Naive thymus-derived CD8-positive, alpha-beta T cell (primary cell): ENCODE measurements at regions of chr15 and their contacts with region 1.

Region 1: GRCh38 chr15:90677807-90678790 is 39.0 kb upstream of the BLM start:
- DNase-seq: peak in 4 of 10 donors; percentile 25 to 69 (median 56)
- ATAC-seq: peak; percentile 91 to 95
- H3K4me3 Mint-ChIP-seq: peak overlapping the region in 8 of 10 donors; percentile 62 to 85 (median 82)
- H3K27ac Mint-ChIP-seq: peak overlapping the region in 9 of 10 donors; percentile 2 to 94 (median 74)
- H3K4me1 Mint-ChIP-seq: peaks cover 12 to 37% (median 23%) of the 10 kb centered on the region in 4 donors
- H3K27me3 Mint-ChIP-seq: no peaks in the 10 kb centered on the region

Region 2: DNA sequence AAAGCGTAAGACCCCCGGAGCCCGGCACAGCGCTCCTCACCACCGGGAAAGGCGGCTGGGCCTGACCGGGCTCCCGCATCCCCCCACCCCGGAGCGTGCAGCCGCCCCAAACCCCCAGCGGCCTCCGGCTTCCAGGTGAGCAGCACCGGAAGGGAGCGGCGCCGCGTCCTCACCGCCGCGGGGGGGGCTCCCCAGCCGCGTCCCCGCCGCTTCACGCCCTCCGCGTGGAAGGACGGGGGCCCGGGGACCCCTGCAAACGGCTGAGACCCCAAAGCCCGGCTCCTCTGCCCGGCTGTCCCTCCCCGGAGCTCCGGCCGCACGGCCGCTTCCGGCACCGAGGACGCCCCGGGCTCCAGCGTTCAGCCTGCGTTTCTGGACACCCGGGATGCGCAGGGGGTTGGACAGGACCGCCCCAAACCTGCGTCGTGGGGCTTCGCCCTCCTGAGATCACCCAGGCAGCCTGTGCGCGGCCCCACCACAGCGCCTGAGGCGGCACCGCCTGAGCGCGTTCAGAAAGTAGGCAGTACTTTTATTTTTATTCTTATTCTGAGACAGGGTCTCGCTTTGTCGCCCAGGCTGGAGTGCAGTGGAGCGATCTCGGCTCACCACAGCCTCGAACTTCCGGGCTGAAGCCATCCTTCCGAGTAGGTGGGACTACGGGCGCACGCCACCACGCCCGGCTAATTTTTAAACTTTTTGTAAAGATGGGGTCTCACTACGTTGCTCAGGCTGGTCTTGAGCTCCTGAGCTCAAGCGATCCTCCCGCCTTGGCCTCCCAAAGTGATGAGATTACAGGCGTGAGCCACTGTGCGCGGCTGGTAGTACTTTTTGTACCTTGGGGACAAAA is 12.6 kb before region 1 on chr15:
- POLR2A ChIA-PET with region 1: interaction called, 29 read pairs
- DNase-seq: peak in 9 of 10 donors; percentile 19 to 61 (median 36)
- ATAC-seq: peak; percentile 73 to 74
- H3K4me3 Mint-ChIP-seq: peak overlapping the region; percentile 77 to 89 (median 84)
- H3K27ac Mint-ChIP-seq: peak overlapping the region in 9 of 10 donors; percentile 31 to 90 (median 72)
- H3K4me1 Mint-ChIP-seq: peaks cover 40 to 60% (median 57%) of the 10 kb centered on the region in 4 donors
- H3K27me3 Mint-ChIP-seq: peaks cover 0 to 11% (median 0%) of the 10 kb centered on the region in 5 donors

Region 3: DNA sequence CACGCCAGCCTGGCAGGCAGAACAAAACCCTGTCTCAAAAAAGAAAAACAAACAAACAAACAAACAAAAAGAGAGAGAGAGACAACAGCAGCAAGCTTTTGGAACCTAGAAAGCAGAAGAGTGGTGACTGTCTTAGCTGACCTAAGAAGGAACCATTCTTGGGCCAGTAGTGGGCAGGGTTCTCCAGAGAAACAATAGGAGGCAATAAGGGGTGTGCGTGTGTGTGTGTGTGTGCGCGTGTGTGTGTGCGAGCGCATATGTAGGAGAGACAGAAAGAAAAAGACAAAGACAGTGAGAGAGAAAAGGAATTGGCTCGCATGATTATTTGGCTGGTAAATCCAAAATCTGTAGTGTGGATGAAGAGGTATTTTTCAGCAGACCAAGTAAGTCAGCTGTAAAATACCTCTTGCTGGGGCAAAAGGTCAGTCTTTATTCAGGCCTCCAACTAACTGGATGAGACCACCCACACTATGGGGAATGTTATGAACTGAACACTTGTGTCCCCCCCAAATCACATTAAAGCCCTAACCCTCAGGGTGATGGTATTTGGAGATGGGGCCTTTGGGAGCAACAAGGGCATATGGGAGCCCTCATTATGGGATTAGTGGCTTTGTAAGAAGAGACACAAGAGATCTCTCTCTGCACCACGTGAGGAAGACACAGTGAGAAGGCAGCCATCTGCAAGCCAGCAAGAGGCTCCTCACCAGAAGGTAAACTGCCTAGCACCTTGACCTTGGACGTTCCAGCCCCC is 24.0 kb after region 1 on chr15:
- POLR2A ChIA-PET with region 1: no interaction called
- DNase-seq: no peak
- ATAC-seq: no peak
- H3K4me3 Mint-ChIP-seq: no peak overlapping the region
- H3K27ac Mint-ChIP-seq: no peak overlapping the region
- H3K4me1 Mint-ChIP-seq: peaks cover 0 to 1% (median 0%) of the 10 kb centered on the region in 4 donors
- H3K27me3 Mint-ChIP-seq: no peaks in the 10 kb centered on the region